Activated CD4-positive, alpha-beta memory T cell treated with anti-CD3 and anti-CD28 coated beads for 36 hours (primary cell): ENCODE measurements at regions of chr16 and their contacts with region 1.

Region 1: GRCh38 chr16:13994239-13995106 is 74.5 kb downstream of the ERCC4 start:
- DNase-seq: no peak
- H3K4me3 Mint-ChIP-seq: no peak overlapping the region
- H3K27ac Mint-ChIP-seq: no peak overlapping the region
- H3K4me1 Mint-ChIP-seq: peaks cover 4% of the 10 kb centered on the region
- H3K27me3 Mint-ChIP-seq: peaks cover 5% of the 10 kb centered on the region

Region 2: GRCh38 chr16:13957197-13958078 is 37.0 kb before region 1 on chr16:
- CTCF ChIA-PET with region 1: no interaction called
- POLR2A ChIA-PET with region 1: no interaction called
- intact Hi-C with region 1: loop called (anchors 1 kb)
- DNase-seq: peak; percentile 56
- H3K4me3 Mint-ChIP-seq: peak overlapping the region; percentile 66
- H3K27ac Mint-ChIP-seq: peak overlapping the region; percentile 69
- H3K4me1 Mint-ChIP-seq: peaks cover 24% of the 10 kb centered on the region
- H3K27me3 Mint-ChIP-seq: peaks cover 17% of the 10 kb centered on the region